Panc1 (cell line): ENCODE measurements at regions of chr16 and their contacts with region 1.

Region 1: DNA sequence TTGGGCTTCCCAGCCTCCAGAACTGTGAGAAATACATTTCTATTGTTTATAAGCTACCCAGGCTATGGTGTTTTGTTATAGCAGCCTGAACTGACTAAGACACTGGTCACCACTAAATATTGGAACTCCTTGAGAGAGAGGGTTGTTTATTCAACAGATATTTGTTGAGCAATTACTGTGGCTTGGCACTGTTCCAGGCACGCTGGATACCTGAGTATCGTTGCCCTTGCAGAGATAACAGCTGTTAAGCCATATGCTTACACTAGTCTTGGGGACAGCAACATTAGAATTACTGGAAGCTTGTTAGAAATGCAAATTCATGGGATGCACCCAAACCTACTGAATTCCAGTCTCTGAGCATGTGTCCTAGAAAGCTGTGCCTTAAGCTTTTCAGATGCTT is 230.7 kb downstream of the HS3ST4 start:
- DNase-seq: no peak
- ATAC-seq: no peak
- H3K4me3 ChIP-seq: no peak overlapping the region
- H3K27ac ChIP-seq: no peak overlapping the region
- H3K4me1 ChIP-seq: no peaks in the 10 kb centered on the region
- H3K27me3 ChIP-seq: no peaks in the 10 kb centered on the region; the same call in 1 of the 2 replicates
- CTCF ChIP-seq: no peak

Region 2: DNA sequence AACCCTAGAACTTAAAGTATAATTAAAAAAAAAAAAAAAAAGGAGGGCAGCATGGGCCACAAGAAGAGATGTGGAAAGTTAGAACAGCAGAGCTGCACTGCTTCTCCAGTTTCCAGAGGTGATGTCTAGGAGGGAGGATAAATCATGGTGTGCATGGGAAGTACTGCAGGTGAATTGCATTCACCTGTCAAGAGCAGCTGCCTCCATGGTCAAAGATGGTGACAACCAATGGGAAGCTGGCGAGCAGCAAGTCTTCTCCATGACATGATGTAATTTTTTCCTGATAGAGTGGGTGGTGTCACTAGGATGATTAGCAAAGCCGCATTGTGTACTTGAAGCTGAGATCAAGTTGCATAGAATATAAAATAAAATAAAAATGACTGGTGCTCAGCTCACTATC is 326.2 kb before region 1 on chr16:
- CTCF ChIA-PET with region 1: no interaction called
- POLR2A ChIA-PET with region 1: no interaction called
- in situ Hi-C with region 1: no loop called
- intact Hi-C with region 1: no loop called
- DNase-seq: no peak
- ATAC-seq: no peak
- H3K4me3 ChIP-seq: no peak overlapping the region
- H3K27ac ChIP-seq: no peak overlapping the region
- H3K4me1 ChIP-seq: no peaks in the 10 kb centered on the region
- H3K27me3 ChIP-seq: no peaks in the 10 kb centered on the region
- CTCF ChIP-seq: no peak

Region 3: GRCh38 chr16:25868106-25868505 is 54.3 kb before region 1 on chr16:
- CTCF ChIA-PET with region 1: no interaction called
- POLR2A ChIA-PET with region 1: no interaction called
- in situ Hi-C with region 1: no loop called
- intact Hi-C with region 1: loop called (anchors 10 kb)
- DNase-seq: no peak
- ATAC-seq: no peak
- H3K4me3 ChIP-seq: no peak overlapping the region
- H3K27ac ChIP-seq: no peak overlapping the region
- H3K4me1 ChIP-seq: no peaks in the 10 kb centered on the region
- H3K27me3 ChIP-seq: no peaks in the 10 kb centered on the region
- CTCF ChIP-seq: no peak